WTC11 (cell line): ENCODE measurements at regions of chr22 and their contacts with region 1.

Region 1: GRCh38 chr22:41697126-41697775 is 2.1 kb upstream of the MEI1 start:
- DNase-seq: peak; percentile 98
- ATAC-seq: peak; percentile 87
- H3K4me3 Mint-ChIP-seq: peak overlapping the region; percentile 52
- H3K27ac Mint-ChIP-seq: no peak overlapping the region
- H3K4me1 Mint-ChIP-seq: peaks cover 10% of the 10 kb centered on the region
- H3K27me3 Mint-ChIP-seq: peaks cover 28% of the 10 kb centered on the region
- CTCF ChIP-seq: peak; percentile 99

Region 2: GRCh38 chr22:41666661-41667258 is 30.5 kb before region 1 on chr22:
- CTCF ChIA-PET with region 1: interaction called, 59 read pairs
- POLR2A ChIA-PET with region 1: interaction called, 8 read pairs
- DNase-seq: peak; percentile 92
- ATAC-seq: peak; percentile 86
- H3K4me3 Mint-ChIP-seq: peak overlapping the region; percentile 60
- H3K27ac Mint-ChIP-seq: peak overlapping the region; percentile 98
- H3K4me1 Mint-ChIP-seq: peaks cover 12% of the 10 kb centered on the region
- H3K27me3 Mint-ChIP-seq: no peaks in the 10 kb centered on the region
- CTCF ChIP-seq: peak; percentile 87

Region 3: DNA sequence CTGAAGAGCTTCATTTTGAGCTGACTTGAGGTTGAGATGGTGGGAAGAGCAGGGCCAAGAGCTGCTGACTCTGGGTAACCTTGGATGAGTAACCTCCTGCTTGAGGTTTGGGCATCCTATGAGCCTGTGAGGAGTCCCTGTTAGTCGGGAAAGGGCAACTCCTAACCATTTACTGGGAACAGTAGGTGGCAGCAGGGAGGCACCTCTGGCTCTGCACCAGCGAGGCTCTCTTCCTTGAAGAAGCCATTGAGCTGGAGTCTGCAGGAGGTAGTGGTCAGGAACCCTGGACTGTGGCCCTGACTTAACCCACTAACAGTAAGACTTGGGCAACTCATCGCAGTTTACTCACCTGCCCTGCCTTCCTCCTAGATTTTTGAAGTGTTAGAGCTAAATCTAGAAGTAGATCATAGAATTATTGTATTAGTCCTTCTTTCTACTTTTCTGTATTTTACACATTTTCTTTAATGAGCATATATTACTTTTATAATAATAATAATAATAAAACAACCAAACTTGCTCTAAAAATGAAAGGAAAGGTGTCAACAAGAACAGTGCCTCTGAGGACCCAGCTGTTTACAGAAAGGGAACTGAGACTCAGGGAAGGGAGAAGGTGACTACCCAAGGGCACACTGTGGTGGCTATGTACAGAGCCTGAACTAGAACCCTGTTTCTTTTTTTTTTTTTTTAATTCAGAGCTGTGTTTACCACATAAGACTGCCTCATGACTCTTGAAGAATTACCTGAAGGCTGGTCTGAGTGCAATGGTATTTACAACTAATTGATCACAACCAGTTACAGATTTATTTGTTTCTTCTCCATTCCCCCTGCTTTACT is 49.5 kb after region 1 on chr22:
- CTCF ChIA-PET with region 1: interaction called, 69 read pairs
- POLR2A ChIA-PET with region 1: no interaction called
- DNase-seq: peak; percentile 78
- ATAC-seq: peak; percentile 99
- H3K4me3 Mint-ChIP-seq: no peak overlapping the region
- H3K27ac Mint-ChIP-seq: no peak overlapping the region
- H3K4me1 Mint-ChIP-seq: no peaks in the 10 kb centered on the region
- H3K27me3 Mint-ChIP-seq: peaks cover 4% of the 10 kb centered on the region
- CTCF ChIP-seq: peak; percentile 50

Region 4: GRCh38 chr22:41786418-41786817 is 89.2 kb after region 1 on chr22:
- CTCF ChIA-PET with region 1: interaction called, 21 read pairs
- POLR2A ChIA-PET with region 1: no interaction called
- DNase-seq: no peak
- ATAC-seq: no peak
- H3K4me3 Mint-ChIP-seq: no peak overlapping the region
- H3K27ac Mint-ChIP-seq: no peak overlapping the region
- H3K4me1 Mint-ChIP-seq: no peaks in the 10 kb centered on the region
- H3K27me3 Mint-ChIP-seq: no peaks in the 10 kb centered on the region
- CTCF ChIP-seq: no peak

Region 5: GRCh38 chr22:41832553-41833368 is 135.5 kb after region 1 on chr22 and contains the start of gene SREBF2:
- CTCF ChIA-PET with region 1: interaction called, 59 read pairs
- POLR2A ChIA-PET with region 1: interaction called, 15 read pairs
- DNase-seq: peak; percentile 100
- ATAC-seq: peak; percentile 92
- H3K4me3 Mint-ChIP-seq: peak within 1 kb of the TSS; percentile 96
- H3K27ac Mint-ChIP-seq: peak within 1 kb of the TSS; percentile 100
- H3K4me1 Mint-ChIP-seq: peaks cover 45% of the 10 kb centered on the region
- H3K27me3 Mint-ChIP-seq: no peaks in the 10 kb centered on the region
- CTCF ChIP-seq: no peak
- total RNA-seq, gene SREBF2: 151 to 173 TPM (median 171 TPM) in 3 replicates

Region 6: GRCh38 chr22:41919357-41920224 is 222.3 kb after region 1 on chr22:
- CTCF ChIA-PET with region 1: interaction called, 65 read pairs
- POLR2A ChIA-PET with region 1: no interaction called
- DNase-seq: peak; percentile 96
- ATAC-seq: peak; percentile 91
- H3K4me3 Mint-ChIP-seq: peak overlapping the region; percentile 70
- H3K27ac Mint-ChIP-seq: no peak overlapping the region
- H3K4me1 Mint-ChIP-seq: peaks cover 26% of the 10 kb centered on the region
- H3K27me3 Mint-ChIP-seq: peaks cover 89% of the 10 kb centered on the region
- CTCF ChIP-seq: no peak

Region 7: GRCh38 chr22:41951898-41952474 is 254.7 kb after region 1 on chr22 and contains the start of gene SMIM45:
- CTCF ChIA-PET with region 1: interaction called, 32 read pairs
- POLR2A ChIA-PET with region 1: interaction called, 3 read pairs
- DNase-seq: peak; percentile 58
- ATAC-seq: peak; percentile 47
- H3K4me3 Mint-ChIP-seq: no peak within 1 kb of the TSS
- H3K27ac Mint-ChIP-seq: 0 out of 2 replicates have a peak within 1 kb of the TSS, but pooled peaks have one; percentile 32
- H3K4me1 Mint-ChIP-seq: peaks cover 26% of the 10 kb centered on the region
- H3K27me3 Mint-ChIP-seq: peaks cover 8% of the 10 kb centered on the region
- CTCF ChIP-seq: no peak